ENCODE measurements at regions of chr20 and their contacts with region 1.

Region 1: DNA sequence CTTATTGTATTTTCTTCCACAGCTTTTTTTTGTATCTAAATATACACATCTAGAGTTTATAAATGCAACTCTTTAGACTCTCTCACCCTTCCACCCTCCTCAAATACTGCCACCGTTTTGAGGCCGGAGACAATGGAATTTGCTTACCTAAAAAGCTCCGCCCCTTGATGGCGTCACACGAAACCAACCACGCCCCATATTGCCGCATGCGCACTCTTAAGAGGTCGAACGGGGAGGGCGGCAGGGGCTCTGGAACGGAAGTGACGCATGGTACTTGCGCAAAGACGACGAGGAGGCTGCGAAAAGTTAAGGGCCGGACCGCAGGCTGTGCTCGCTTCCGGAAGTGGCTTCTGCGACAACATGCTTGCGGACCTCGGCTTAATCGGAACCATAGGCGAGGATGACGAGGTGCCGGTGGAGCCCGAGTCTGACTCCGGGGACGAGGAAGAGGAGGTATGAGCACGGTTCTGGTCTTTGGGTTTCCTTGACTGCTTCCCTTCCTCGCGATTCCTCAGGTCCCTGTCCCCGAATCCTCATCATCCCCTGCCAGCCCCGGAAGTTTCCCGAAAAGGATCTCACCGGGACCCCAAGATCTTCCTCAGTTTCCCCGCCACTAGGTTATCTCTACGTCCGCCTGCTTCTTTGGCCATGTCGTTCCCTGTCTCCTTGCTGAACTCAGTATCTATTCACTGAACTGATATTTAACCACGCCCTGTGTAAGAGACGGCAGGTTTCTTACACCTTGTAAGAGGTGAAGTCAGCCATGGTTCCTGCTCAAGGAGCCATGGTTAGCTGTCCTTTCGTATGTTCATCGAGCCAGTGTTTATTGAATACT is at the start of gene DDX27:
- DNase-seq: peak; percentile 96
- CTCF ChIP-seq: no peak

Region 2: DNA sequence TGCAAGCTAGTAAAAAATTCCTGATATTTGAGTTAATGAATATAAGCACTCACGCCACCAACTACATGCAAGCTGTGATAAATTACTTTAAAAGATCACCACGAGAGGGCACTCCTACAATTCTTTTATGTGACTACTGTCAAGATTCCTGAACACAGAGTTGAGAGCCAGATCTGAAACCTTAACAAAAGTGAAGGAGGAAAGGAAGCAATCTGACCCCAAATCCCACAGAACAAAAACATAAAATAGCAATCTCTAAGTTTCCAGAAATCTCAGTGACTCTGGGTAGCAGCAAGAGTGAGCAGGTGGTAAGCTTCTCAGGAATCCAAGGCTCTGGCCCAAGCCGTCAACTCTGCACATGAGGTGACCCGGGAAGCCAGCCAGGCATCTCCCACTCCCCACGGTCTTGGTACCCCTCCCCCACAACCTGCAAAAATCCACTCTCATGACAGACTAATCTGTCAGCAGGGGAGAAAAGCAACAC is 86.3 kb before region 1 on chr20:
- CTCF ChIA-PET with region 1: interaction called, 103 read pairs
- POLR2A ChIA-PET with region 1: no interaction called
- DNase-seq: peak; percentile 59
- CTCF ChIP-seq: peak; percentile 61

Region 3: GRCh38 chr20:49151436-49151835 is 67.9 kb before region 1 on chr20:
- CTCF ChIA-PET with region 1: interaction called, 12 read pairs
- POLR2A ChIA-PET with region 1: no interaction called
- DNase-seq: no peak
- CTCF ChIP-seq: no peak

Region 4: DNA sequence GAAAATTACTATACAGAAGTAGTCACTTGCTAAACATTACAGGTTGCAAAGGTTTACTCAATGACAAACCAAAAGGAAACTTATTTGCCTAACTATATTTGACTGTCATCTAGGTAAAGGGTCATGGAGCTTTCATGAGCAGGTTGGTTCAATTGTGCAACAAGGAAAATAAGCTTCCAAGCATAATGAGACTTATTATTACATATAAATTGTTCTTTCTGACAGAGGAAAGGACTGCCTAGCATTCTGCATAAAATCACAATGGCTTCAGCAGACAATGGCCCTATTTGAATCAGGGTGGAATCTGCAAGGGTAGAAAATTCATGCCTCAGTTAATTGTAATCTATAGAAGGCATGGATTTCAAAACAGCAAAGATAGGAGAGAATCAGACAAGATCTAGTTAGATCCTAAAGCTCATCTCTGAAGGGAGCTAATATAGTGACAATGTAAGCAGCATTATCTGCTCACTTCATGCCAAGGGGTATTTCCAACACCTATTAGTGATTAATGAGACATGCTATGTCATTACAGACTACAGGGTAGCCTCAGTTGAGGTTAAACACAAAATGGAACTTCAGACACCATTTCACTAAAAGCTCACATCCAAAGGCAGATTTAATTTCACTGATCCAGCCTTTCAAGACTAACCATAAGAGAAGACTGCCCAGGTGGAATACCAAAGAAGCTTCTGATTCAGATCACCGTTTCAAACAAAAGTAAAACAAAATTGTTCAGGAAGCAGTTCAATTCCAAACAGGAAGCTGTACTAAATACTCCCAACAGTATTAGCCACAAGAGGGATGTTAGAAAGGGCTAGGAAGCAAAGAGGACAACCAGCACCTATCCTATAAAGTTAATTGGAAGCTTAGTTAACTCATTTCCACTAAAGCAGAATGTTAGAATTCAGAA is 39.7 kb before region 1 on chr20:
- CTCF ChIA-PET with region 1: interaction called, 41 read pairs
- POLR2A ChIA-PET with region 1: interaction called, 5 read pairs
- DNase-seq: peak; percentile 42
- CTCF ChIP-seq: no peak

Region 5: GRCh38 chr20:49199729-49200293 is 19.5 kb before region 1 on chr20:
- CTCF ChIA-PET with region 1: interaction called, 45 read pairs
- POLR2A ChIA-PET with region 1: no interaction called
- DNase-seq: no peak
- CTCF ChIP-seq: no peak

Region 6: GRCh38 chr20:49245921-49246740 is 26.8 kb after region 1 on chr20:
- CTCF ChIA-PET with region 1: interaction called, 14 read pairs
- POLR2A ChIA-PET with region 1: no interaction called
- DNase-seq: peak; percentile 60
- CTCF ChIP-seq: peak; percentile 66

Measured in GM10248 (cell line).